T-cell (primary cell): ENCODE measurements at regions of chr10 and their contacts with region 1.

Region 1: DNA sequence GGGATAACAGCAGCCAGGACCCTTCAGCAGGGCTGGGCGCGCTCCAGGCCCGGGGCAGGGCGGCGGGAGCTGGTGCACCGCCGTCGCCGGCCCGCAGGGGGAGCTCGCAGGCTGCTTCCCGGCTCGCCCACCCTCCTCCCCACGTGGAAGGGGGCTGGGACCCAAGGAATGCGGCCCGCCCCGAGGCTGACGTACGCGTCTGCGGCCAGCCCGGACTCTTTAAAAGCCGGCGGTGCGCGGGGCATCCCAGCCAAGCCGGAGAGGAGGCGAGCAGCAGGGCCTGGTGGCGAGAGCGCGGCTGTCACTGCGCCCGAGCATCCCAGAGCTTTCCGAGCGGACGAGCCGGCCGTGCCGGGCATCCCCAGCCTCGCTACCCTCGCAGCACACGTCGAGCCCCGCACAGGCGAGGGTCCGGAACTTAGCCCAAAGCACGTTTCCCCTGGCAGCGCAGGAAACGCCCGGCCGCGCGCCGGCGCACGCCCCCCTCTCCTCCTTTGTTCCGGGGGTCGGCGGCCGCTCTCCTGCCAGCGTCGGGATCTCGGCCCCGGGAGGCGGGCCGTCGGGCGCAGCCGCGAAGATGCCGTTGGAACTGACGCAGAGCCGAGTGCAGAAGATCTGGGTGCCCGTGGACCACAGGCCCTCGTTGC is at the start of gene PFKFB3:
- DNase-seq: peak; percentile 67 to 94 (median 77)
- ATAC-seq: peak; percentile 58 to 69 (median 64)
- H3K4me3 ChIP-seq: peak within 1 kb of the TSS; percentile 59 to 89
- H3K4me3 Mint-ChIP-seq: peak within 1 kb of the TSS; percentile 88 to 99 (median 95)
- H3K27ac ChIP-seq: peak within 1 kb of the TSS; percentile 34
- H3K27ac Mint-ChIP-seq: peak within 1 kb of the TSS; percentile 88
- H3K4me1 ChIP-seq: peaks cover 17 to 29% of the 10 kb centered on the region in 2 experiments
- H3K4me1 Mint-ChIP-seq: peaks cover 32 to 37% (median 35%) of the 10 kb centered on the region in 3 donors
- H3K27me3 ChIP-seq: no peaks in the 10 kb centered on the region
- H3K27me3 Mint-ChIP-seq: no peaks in the 10 kb centered on the region
- total RNA-seq, gene PFKFB3: 48.7 to 99.2 (median 93.9) TPM

Region 2: GRCh38 chr10:6171881-6172695 is 30.7 kb before region 1 on chr10:
- CTCF ChIA-PET with region 1: interaction called, 7 to 27 read pairs
- POLR2A ChIA-PET with region 1: no interaction called
- DNase-seq: peak in 1 of 35 experiments; percentile 39
- ATAC-seq: no peak
- H3K4me3 ChIP-seq: no peak overlapping the region
- H3K4me3 Mint-ChIP-seq: peak overlapping the region in 1 of 3 donors; percentile 75
- H3K27ac ChIP-seq: peak overlapping the region; percentile 56
- H3K27ac Mint-ChIP-seq: peak overlapping the region; percentile 90
- H3K4me1 ChIP-seq: peaks cover 25 to 66% of the 10 kb centered on the region in 2 experiments
- H3K4me1 Mint-ChIP-seq: peaks cover 84 to 89% (median 89%) of the 10 kb centered on the region in 3 donors
- H3K27me3 ChIP-seq: no peaks in the 10 kb centered on the region
- H3K27me3 Mint-ChIP-seq: no peaks in the 10 kb centered on the region

Region 3: GRCh38 chr10:6275022-6275997 is 72.5 kb after region 1 on chr10:
- CTCF ChIA-PET with region 1: interaction called in 1 of 2 experiments, 13 read pairs
- POLR2A ChIA-PET with region 1: interaction called in 1 of 2 experiments, 3 read pairs
- DNase-seq: peak; percentile 53 to 92 (median 85)
- ATAC-seq: peak; percentile 85 to 93 (median 92)
- H3K4me3 ChIP-seq: peak overlapping the region; percentile 19 to 34
- H3K4me3 Mint-ChIP-seq: peak overlapping the region; percentile 65 to 67 (median 66)
- H3K27ac ChIP-seq: peak overlapping the region; percentile 84
- H3K27ac Mint-ChIP-seq: peak overlapping the region; percentile 96 to 97
- H3K4me1 ChIP-seq: peaks cover 3 to 37% of the 10 kb centered on the region in 2 experiments
- H3K4me1 Mint-ChIP-seq: peaks cover 28 to 53% (median 49%) of the 10 kb centered on the region in 3 donors
- H3K27me3 ChIP-seq: no peaks in the 10 kb centered on the region
- H3K27me3 Mint-ChIP-seq: no peaks in the 10 kb centered on the region

Region 4: GRCh38 chr10:6348096-6348874 is 145.5 kb after region 1 on chr10:
- CTCF ChIA-PET with region 1: interaction called in 1 of 2 experiments, 15 read pairs
- POLR2A ChIA-PET with region 1: no interaction called
- DNase-seq: peak; percentile 53 to 95 (median 85)
- ATAC-seq: peak; percentile 91 to 94 (median 92)
- H3K4me3 ChIP-seq: peak overlapping the region in 1 of 2 donors; percentile 27
- H3K4me3 Mint-ChIP-seq: peak overlapping the region; percentile 74 to 76 (median 75)
- H3K27ac ChIP-seq: peak overlapping the region; percentile 89
- H3K27ac Mint-ChIP-seq: peak overlapping the region; percentile 97
- H3K4me1 ChIP-seq: peaks cover 21 to 27% of the 10 kb centered on the region in 2 experiments
- H3K4me1 Mint-ChIP-seq: peaks cover 62 to 64% (median 62%) of the 10 kb centered on the region in 3 donors
- H3K27me3 ChIP-seq: no peaks in the 10 kb centered on the region
- H3K27me3 Mint-ChIP-seq: no peaks in the 10 kb centered on the region

Region 5: DNA sequence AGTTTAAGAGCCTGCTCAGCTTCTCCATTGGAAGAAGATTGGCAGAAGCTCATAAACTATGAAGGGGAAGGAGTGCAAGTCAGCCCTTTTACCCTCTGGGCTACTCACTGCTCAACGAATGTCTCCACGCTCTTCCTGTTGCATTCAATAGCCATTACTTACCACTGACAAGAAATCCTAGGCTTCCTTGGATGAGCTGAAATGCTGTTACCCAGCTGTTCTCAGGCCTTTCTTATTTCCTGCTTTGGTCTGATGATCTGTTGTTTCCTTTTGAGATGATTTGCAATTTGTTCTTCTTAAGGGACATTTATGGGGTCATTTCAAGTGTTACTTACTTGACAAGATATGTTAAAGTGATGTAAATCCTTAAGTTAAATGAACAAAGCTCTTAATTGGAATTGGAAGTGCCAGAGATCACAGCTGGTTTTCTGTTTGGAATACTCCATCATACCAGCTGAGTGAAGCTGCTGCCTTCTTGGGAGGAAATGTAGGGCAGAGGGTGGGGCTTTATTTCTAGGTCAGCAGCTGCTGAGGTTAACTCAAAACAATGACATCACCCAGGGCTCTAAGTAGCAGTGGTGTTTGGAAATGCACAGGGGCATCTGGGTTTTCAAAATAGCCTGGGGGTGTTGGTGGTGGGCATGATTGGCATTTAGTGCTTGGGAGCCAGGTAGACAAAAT is 207.3 kb after region 1 on chr10:
- CTCF ChIA-PET with region 1: interaction called, 6 to 24 read pairs
- POLR2A ChIA-PET with region 1: interaction called in 1 of 2 experiments, 4 read pairs
- DNase-seq: peak in 34 of 35 experiments; percentile 16 to 81 (median 54)
- ATAC-seq: peak; percentile 94 to 97 (median 96)
- H3K4me3 ChIP-seq: peak overlapping the region in 1 of 2 donors; percentile 22
- H3K4me3 Mint-ChIP-seq: peak overlapping the region; percentile 64 to 75 (median 65)
- H3K27ac ChIP-seq: peak overlapping the region; percentile 84
- H3K27ac Mint-ChIP-seq: peak overlapping the region; percentile 90 to 98
- H3K4me1 ChIP-seq: peaks cover 12 to 15% of the 10 kb centered on the region in 2 experiments
- H3K4me1 Mint-ChIP-seq: peaks cover 36 to 49% (median 48%) of the 10 kb centered on the region in 3 donors
- H3K27me3 ChIP-seq: no peaks in the 10 kb centered on the region
- H3K27me3 Mint-ChIP-seq: no peaks in the 10 kb centered on the region